ENCODE measurements at regions of chr15 and their contacts with region 1.

Region 1: GRCh38 chr15:76866716-76867321 is 38.3 kb downstream of the SCAPER start:
- DNase-seq: peak; percentile 20
- ATAC-seq: no peak
- H3K4me3 Mint-ChIP-seq: no peak overlapping the region
- H3K27ac Mint-ChIP-seq: no peak overlapping the region
- H3K4me1 Mint-ChIP-seq: peaks cover 38% of the 10 kb centered on the region
- H3K27me3 Mint-ChIP-seq: no peaks in the 10 kb centered on the region

Region 2: DNA sequence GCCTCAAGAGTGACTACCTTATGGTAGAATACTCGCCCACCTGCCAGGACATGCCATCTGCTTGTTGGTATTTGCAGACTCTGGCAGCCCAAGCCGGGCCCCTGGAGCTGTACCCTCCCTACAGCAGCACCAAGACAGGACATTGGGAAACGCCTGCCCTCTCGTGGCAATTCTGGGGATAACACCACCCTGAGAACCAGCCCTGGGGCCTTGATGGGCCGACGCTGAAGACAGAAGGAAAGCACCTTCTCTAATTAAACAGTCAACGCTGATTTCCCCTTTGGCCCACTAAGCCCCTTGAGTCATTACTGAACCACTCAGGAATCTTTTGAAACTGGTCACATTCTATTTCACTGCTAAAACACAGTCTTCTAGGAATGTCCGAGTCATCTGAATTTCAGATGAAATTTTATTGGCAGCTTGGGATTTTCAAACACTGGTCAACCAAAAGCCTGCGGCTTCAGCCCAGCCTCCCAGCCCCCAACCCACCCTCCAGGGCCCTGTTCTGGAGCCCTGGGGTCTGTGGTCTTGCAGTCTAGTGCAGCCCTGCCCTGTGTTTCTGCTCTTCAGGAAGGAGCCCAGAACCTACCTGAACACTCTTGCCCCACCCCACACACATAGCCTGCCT is 715.7 kb before region 1 on chr15:
- CTCF ChIA-PET with region 1: no interaction called
- POLR2A ChIA-PET with region 1: no interaction called
- intact Hi-C with region 1: loop called in 1 of 2 experiments (anchors 1 kb)
- DNase-seq: peak; percentile 90
- ATAC-seq: peak; percentile 93
- H3K4me3 Mint-ChIP-seq: no peak overlapping the region
- H3K27ac Mint-ChIP-seq: no peak overlapping the region
- H3K4me1 Mint-ChIP-seq: peaks cover 22% of the 10 kb centered on the region
- H3K27me3 Mint-ChIP-seq: peaks cover 8% of the 10 kb centered on the region

Region 3: GRCh38 chr15:76235186-76235826 is 631.5 kb before region 1 on chr15:
- CTCF ChIA-PET with region 1: interaction called, 5 read pairs
- POLR2A ChIA-PET with region 1: no interaction called
- intact Hi-C with region 1: loop called (anchors 2 to 10 kb)
- DNase-seq: no peak
- ATAC-seq: peak; percentile 77
- H3K4me3 Mint-ChIP-seq: no peak overlapping the region
- H3K27ac Mint-ChIP-seq: no peak overlapping the region
- H3K4me1 Mint-ChIP-seq: no peaks in the 10 kb centered on the region
- H3K27me3 Mint-ChIP-seq: no peaks in the 10 kb centered on the region

Region 4: DNA sequence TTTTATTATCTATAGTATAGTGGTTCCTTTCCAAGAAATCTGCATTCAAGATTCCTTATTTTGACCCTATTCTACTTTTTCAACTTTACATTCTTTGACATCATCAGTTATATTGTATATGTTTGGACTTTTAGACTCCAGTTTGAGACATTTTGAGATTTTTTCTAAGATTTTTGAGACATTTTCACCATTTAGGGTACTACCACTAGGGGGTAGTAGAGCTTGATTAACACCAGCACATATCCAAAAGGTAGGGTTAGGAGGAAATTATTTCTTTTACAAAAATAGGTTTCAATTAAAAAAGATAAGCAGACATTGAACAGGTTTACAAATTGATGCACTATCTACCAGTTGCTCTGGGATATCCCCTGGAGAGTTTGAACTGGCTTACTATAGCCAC is 224.1 kb before region 1 on chr15:
- CTCF ChIA-PET with region 1: interaction called, 4 read pairs
- POLR2A ChIA-PET with region 1: no interaction called
- intact Hi-C with region 1: loop called in 1 of 2 experiments (anchors 2 kb)
- DNase-seq: no peak
- ATAC-seq: no peak
- H3K4me3 Mint-ChIP-seq: no peak overlapping the region
- H3K27ac Mint-ChIP-seq: no peak overlapping the region
- H3K4me1 Mint-ChIP-seq: no peaks in the 10 kb centered on the region
- H3K27me3 Mint-ChIP-seq: no peaks in the 10 kb centered on the region

Region 5: GRCh38 chr15:76756381-76756780 is 110.4 kb before region 1 on chr15:
- CTCF ChIA-PET with region 1: no interaction called
- POLR2A ChIA-PET with region 1: no interaction called
- intact Hi-C with region 1: loop called in 1 of 2 experiments (anchors 2 kb)
- DNase-seq: no peak
- ATAC-seq: no peak
- H3K4me3 Mint-ChIP-seq: no peak overlapping the region
- H3K27ac Mint-ChIP-seq: no peak overlapping the region
- H3K4me1 Mint-ChIP-seq: peaks cover 14% of the 10 kb centered on the region
- H3K27me3 Mint-ChIP-seq: no peaks in the 10 kb centered on the region

Region 6: GRCh38 chr15:76815401-76815800 is 51.4 kb before region 1 on chr15:
- CTCF ChIA-PET with region 1: no interaction called
- POLR2A ChIA-PET with region 1: no interaction called
- intact Hi-C with region 1: no loop called
- DNase-seq: no peak
- ATAC-seq: no peak
- H3K4me3 Mint-ChIP-seq: no peak overlapping the region
- H3K27ac Mint-ChIP-seq: no peak overlapping the region
- H3K4me1 Mint-ChIP-seq: peaks cover 33% of the 10 kb centered on the region
- H3K27me3 Mint-ChIP-seq: no peaks in the 10 kb centered on the region

Region 7: DNA sequence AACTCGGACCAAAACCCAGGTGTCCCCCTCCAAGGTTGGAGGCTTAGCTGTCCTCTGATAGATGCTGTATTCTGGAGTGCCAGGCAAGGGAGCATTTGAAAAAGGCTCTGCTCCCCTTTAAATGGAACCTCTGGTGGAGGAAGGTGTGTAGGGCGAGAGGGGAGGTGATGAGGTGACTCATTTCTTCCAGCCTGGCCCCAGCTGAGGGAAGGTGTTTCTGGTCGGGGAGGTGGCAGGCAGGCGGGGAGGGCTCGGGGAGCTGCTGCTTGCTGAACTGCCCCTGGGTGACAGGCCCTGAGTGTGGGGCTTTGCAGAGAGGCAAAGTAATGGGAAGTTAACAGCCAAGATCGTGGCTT is 146.9 kb after region 1 on chr15:
- CTCF ChIA-PET with region 1: no interaction called
- POLR2A ChIA-PET with region 1: no interaction called
- intact Hi-C with region 1: no loop called
- DNase-seq: peak; percentile 95
- ATAC-seq: peak; percentile 89
- H3K4me3 Mint-ChIP-seq: peak overlapping the region; percentile 54
- H3K27ac Mint-ChIP-seq: peak overlapping the region; percentile 90
- H3K4me1 Mint-ChIP-seq: peaks cover 92% of the 10 kb centered on the region
- H3K27me3 Mint-ChIP-seq: no peaks in the 10 kb centered on the region

Measured in activated CD4-positive, alpha-beta T cell treated with anti-CD3 and anti-CD28 coated beads for 36 hours (primary cell).